CD14-positive monocyte (primary cell): ENCODE measurements at regions of chr1 and their contacts with region 1.

Region 1: GRCh38 chr1:65419681-65420589 is 533 bp upstream of the LEPR start:
- DNase-seq: peak; percentile 97
- H3K4me3 ChIP-seq: peak overlapping the region; percentile 72 to 89 (median 79)
- H3K4me3 Mint-ChIP-seq: peak overlapping the region in 1 of 2 donors; percentile 96
- H3K27ac ChIP-seq: peak overlapping the region; percentile 95 to 100
- H3K27ac Mint-ChIP-seq: peak overlapping the region in 6 of 7 donors; percentile 84 to 97 (median 88)
- H3K4me1 ChIP-seq: peaks cover 35 to 41% of the 10 kb centered on the region in 2 donors
- H3K4me1 Mint-ChIP-seq: peaks cover 10% of the 10 kb centered on the region
- H3K27me3 ChIP-seq: no peaks in the 10 kb centered on the region
- H3K27me3 Mint-ChIP-seq: no peaks in the 10 kb centered on the region
- CTCF ChIP-seq: no peak

Region 2: GRCh38 chr1:65247513-65248359 is 172.2 kb before region 1 on chr1:
- intact Hi-C with region 1: loop called in 1 of 2 experiments (anchors 10 kb)
- DNase-seq: no peak
- H3K4me3 ChIP-seq: no peak overlapping the region
- H3K4me3 Mint-ChIP-seq: no peak overlapping the region
- H3K27ac ChIP-seq: peak overlapping the region in 1 of 2 donors; percentile 78
- H3K27ac Mint-ChIP-seq: peak overlapping the region in 4 of 7 donors; percentile 6 to 79 (median 66)
- H3K4me1 ChIP-seq: peaks cover 34 to 39% of the 10 kb centered on the region in 2 donors
- H3K4me1 Mint-ChIP-seq: peaks cover 35% of the 10 kb centered on the region
- H3K27me3 ChIP-seq: no peaks in the 10 kb centered on the region
- H3K27me3 Mint-ChIP-seq: peaks cover 0 to 3% (median 0%) of the 10 kb centered on the region in 3 donors
- CTCF ChIP-seq: no peak